AG04449 (cell line): ENCODE measurements at regions of chr3 and their contacts with region 1.

Region 1: GRCh38 chr3:157606011-157606851 is 103.0 kb upstream of the VEPH1 start:
- DNase-seq: no peak
- H3K4me3 ChIP-seq: no peak overlapping the region
- CTCF ChIP-seq: peak; percentile 90

Region 2: DNA sequence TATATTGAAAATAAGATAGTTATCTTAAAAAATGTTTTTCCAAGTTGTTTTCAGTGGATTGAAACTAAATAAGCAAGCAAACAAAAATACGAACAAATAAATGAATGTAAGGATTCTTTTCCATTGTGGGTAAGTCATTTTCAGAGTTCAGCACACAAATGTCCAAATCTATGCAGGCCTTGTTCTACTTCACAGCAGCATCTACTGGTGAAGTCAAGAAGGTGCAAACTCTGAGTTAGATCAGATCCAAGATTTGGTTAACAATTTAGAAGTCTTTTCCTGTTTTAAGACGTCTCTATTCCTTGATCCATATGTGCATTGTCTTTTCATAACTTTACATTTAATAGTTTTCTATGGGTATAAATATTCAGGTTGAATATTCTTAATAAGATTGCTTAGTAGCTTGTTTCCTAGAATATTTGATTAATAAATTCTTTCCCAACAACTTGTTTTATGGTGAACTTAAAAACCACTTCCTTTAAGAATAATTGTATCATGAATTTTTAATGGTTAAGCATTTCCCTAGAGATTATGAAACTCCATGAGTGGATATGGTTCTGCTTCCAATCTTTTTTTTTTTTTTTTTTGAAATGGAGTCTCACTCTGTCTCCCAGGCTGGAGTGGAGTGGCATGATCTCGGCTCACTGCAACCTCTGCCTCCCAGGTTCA is 159.1 kb before region 1 on chr3:
- CTCF ChIA-PET with region 1: no interaction called
- POLR2A ChIA-PET with region 1: no interaction called
- DNase-seq: no peak
- H3K4me3 ChIP-seq: no peak overlapping the region
- CTCF ChIP-seq: peak; percentile 69

Region 3: DNA sequence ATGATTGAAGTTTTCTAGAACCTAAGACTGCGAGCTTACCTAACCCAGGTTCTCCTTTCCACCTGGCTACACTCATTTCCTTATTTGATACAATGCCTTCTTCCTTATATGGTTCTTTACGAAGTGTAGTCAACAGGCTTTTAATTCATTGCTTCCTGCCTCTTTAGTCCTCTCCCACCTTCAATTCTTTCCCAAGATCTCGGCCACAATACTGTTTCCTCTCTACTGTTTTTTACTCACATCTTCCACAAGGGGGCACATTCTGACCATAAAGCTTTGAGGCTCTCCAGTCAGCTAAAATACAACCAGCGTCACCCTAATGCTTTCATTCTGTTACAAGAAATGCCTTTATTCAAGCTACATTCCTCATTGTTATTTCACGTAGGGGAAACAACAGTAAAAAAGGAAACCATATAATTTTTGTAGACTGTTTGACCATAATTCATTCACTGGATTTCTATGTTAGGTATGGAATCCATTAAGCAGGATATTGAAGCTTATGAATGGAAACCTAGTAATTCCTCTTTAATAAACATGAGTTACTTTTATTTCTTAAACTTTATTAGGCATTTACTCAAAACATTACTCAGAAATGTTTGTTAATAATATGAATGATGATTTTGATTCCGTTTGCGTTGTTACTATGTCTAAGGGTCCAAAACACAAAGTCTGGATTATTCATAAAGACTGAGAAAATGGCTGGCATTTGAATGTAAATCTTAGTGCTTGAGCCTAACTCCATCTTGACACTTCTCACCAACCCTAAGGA is 73.5 kb before region 1 on chr3:
- CTCF ChIA-PET with region 1: interaction called, 61 read pairs
- POLR2A ChIA-PET with region 1: no interaction called
- DNase-seq: peak; percentile 71
- H3K4me3 ChIP-seq: peak overlapping the region; percentile 44
- CTCF ChIP-seq: peak; percentile 59

Region 4: DNA sequence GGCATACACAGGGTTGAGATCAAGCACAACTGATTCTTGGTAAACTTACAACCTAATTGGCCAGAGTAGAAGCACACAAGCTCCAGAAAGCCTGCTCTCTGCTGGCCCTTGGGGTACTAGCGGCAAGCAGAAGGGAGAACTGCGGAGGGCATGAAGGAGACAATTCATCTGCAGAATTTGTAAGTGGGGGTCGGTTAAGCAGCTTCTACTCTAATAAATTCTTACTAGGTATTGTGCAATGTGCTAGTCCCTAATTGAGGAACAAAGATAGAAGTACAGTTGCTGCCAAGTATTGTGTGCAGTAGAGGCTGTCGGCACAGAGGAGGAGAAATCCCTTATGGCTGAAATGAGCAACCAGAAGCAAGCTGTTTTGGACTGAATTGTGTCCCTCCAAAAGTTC is 11.8 kb before region 1 on chr3:
- CTCF ChIA-PET with region 1: interaction called, 37 read pairs
- POLR2A ChIA-PET with region 1: no interaction called
- DNase-seq: no peak
- H3K4me3 ChIP-seq: no peak overlapping the region
- CTCF ChIP-seq: peak; percentile 14

Region 5: GRCh38 chr3:157906627-157907026 is 300.4 kb after region 1 on chr3:
- CTCF ChIA-PET with region 1: interaction called, 12 read pairs
- POLR2A ChIA-PET with region 1: no interaction called
- DNase-seq: no peak
- H3K4me3 ChIP-seq: no peak overlapping the region
- CTCF ChIP-seq: peak; percentile 44

Region 6: DNA sequence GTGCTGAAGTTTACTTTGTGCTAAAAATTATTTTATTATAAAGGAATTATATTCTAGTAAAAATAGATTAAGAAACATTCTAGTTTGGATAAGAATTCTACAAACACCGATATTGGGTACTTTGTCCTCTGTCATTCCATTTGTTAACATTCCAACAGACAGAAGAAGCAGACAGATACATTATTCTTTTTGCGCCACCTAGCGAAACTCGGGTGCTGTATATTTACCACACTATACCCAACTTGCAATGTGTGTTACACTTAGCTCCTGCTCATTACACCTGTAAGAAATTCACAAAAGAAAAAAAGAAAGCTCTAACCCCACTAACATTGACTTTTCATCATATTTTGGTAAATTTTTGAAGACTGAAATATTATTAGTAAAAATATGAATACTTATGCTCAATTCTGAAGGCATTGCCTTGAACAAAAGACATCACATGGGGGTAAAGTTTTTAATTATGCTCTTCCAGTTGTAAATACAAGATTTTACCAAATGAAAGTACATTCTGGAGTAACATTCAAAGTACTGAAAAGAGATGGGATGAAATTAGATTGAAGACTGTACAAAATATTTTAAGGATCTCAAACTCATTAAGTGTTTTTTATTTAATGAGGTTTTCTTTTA is 828.3 kb after region 1 on chr3:
- CTCF ChIA-PET with region 1: interaction called, 40 read pairs
- POLR2A ChIA-PET with region 1: no interaction called
- DNase-seq: peak; percentile 14
- H3K4me3 ChIP-seq: no peak overlapping the region
- CTCF ChIP-seq: peak; percentile 54

Region 7: DNA sequence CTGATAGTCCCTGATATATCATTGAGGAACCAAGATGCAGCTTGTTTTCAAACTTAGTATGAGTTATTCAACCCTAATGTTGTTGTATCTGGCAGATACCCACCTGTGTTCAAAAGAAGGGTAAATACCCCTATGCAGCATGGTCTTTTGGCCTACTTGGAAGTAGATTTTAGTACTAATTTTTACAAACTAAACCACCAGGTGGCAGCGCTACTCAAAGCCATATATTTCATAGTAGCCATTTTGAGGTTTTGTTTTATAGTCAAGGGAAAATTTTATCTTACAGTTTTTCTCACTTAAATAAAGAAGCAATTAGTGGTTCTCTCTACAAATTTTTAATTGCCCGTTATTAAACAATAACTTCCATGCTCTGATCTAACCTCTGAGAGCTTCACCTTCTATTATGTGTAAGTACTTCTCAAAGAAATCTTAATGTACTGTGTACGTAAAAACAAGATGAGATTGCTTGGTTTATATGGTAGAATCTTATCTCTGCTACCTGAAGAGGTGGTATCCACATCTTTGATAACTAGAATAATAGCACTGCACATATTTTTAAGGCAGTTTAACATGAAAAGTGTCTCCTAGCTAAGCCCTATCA is 933.3 kb after region 1 on chr3:
- CTCF ChIA-PET with region 1: interaction called, 18 read pairs
- POLR2A ChIA-PET with region 1: no interaction called
- DNase-seq: no peak
- H3K4me3 ChIP-seq: no peak overlapping the region
- CTCF ChIP-seq: peak; percentile 52